IMR-90 (cell line): ENCODE measurements at regions of chr21 and their contacts with region 1.

Region 1: DNA sequence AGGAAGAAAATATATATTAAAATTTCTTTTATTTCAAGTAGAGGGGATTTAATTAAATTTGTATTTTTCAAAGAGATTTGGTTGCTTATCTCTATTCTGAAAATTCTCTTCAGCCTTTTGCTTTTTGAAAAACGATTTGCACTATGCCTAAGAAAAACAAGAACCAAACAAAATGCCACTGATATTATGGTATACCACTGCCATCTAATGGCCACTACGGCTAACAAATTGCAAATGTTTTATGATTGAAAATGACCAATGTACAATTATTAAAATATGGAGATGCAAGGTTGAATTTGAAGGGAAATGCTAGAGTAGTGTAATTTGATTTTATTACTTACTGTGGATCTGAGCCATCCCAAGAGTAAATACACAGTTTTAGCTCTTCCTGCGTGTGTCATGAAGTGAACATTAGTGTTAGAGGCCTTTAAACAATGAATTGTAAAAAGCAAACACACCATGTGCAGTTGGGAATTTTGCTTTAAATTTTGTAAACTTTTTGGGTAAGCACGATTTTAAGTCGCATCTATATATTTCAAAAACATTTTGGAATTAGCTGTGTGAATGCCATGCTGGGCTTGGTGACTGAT is 137.4 kb upstream of the USP25 start:
- DNase-seq: peak; percentile 45
- ATAC-seq: peak; percentile 62
- H3K4me3 ChIP-seq: no peak overlapping the region
- H3K27ac ChIP-seq: no peak overlapping the region
- H3K4me1 ChIP-seq: no peaks in the 10 kb centered on the region
- H3K27me3 ChIP-seq: peaks cover 2% of the 10 kb centered on the region
- CTCF ChIP-seq: peak; percentile 69
- POLR2A ChIP-seq: no peak
- RAD21 ChIP-seq: peak; percentile 74

Region 2: GRCh38 chr21:14259747-14260146 is 1332.6 kb before region 1 on chr21:
- CTCF ChIA-PET with region 1: no interaction called
- POLR2A ChIA-PET with region 1: no interaction called
- dilution Hi-C with region 1: no loop called
- in situ Hi-C with region 1: no loop called
- intact Hi-C with region 1: loop called (anchors 2 kb)
- DNase-seq: peak; percentile 56
- ATAC-seq: peak; percentile 74
- H3K4me3 ChIP-seq: no peak overlapping the region
- H3K27ac ChIP-seq: no peak overlapping the region
- H3K4me1 ChIP-seq: no peaks in the 10 kb centered on the region
- H3K27me3 ChIP-seq: no peaks in the 10 kb centered on the region
- CTCF ChIP-seq: peak; percentile 61
- POLR2A ChIP-seq: no peak
- RAD21 ChIP-seq: peak; percentile 63

Region 3: DNA sequence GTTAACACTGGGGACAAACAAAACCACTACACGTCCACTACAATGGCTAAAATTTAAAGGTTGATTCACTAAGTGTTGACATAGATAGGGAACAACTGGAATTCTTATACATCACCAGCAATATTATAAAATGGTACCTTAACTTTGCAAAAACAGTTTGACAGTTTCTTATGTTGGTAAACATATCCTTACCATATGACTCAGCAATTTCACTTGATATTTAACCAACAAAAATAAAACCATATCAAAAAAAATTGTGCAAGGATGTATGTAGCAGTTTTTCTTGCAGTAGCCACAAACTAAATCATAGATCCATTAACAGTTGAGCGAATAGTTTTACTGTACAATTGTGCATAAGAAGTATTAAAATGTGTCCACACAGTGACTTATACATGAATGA is 1204.1 kb before region 1 on chr21:
- CTCF ChIA-PET with region 1: no interaction called
- POLR2A ChIA-PET with region 1: no interaction called
- dilution Hi-C with region 1: no loop called
- in situ Hi-C with region 1: no loop called
- intact Hi-C with region 1: loop called (anchors 5 kb)
- DNase-seq: no peak
- ATAC-seq: no peak
- H3K4me3 ChIP-seq: no peak overlapping the region
- H3K27ac ChIP-seq: no peak overlapping the region
- H3K4me1 ChIP-seq: no peaks in the 10 kb centered on the region
- H3K27me3 ChIP-seq: no peaks in the 10 kb centered on the region
- CTCF ChIP-seq: no peak
- POLR2A ChIP-seq: no peak
- RAD21 ChIP-seq: no peak

Region 4: GRCh38 chr21:14403681-14404318 is 1188.6 kb before region 1 on chr21:
- CTCF ChIA-PET with region 1: no interaction called
- POLR2A ChIA-PET with region 1: no interaction called
- dilution Hi-C with region 1: no loop called
- in situ Hi-C with region 1: no loop called
- intact Hi-C with region 1: loop called (anchors 1 kb)
- DNase-seq: peak; percentile 45
- ATAC-seq: peak; percentile 69
- H3K4me3 ChIP-seq: no peak overlapping the region
- H3K27ac ChIP-seq: no peak overlapping the region
- H3K4me1 ChIP-seq: no peaks in the 10 kb centered on the region
- H3K27me3 ChIP-seq: no peaks in the 10 kb centered on the region
- CTCF ChIP-seq: peak; percentile 66
- POLR2A ChIP-seq: no peak
- RAD21 ChIP-seq: peak; percentile 66

Region 5: GRCh38 chr21:15638856-15639549 is 46.6 kb after region 1 on chr21:
- CTCF ChIA-PET with region 1: no interaction called
- POLR2A ChIA-PET with region 1: no interaction called
- dilution Hi-C with region 1: no loop called
- in situ Hi-C with region 1: no loop called
- intact Hi-C with region 1: no loop called
- DNase-seq: no peak
- ATAC-seq: no peak; the same call in 1 of the 2 replicates
- H3K4me3 ChIP-seq: no peak overlapping the region
- H3K27ac ChIP-seq: no peak overlapping the region
- H3K4me1 ChIP-seq: no peaks in the 10 kb centered on the region
- H3K27me3 ChIP-seq: no peaks in the 10 kb centered on the region
- CTCF ChIP-seq: no peak
- POLR2A ChIP-seq: no peak
- RAD21 ChIP-seq: no peak

Region 6: DNA sequence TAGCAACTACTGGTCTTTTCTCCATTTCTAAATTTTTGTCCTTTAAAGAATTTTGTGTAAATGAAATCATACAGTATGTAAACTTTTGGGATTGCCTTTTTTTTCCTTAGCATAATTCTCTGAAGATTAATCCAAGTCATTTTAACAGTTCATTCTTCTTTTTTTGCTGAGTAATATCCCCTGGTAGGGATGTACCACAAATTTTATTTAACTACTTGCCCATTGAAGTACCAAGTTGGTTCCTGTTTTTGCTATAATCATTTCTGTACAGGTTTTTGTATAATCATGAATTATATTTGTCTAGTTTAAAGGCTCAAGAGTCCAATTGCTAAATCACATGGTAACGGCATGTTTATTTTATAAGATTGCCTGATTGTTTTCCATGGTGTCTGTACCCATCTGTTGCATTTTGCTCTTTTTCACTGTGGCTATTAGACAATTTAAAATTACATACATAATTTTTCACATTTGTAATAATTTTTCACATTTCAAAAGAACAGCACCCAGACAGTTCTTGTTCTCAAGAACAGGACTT is 1028.5 kb after region 1 on chr21:
- CTCF ChIA-PET with region 1: no interaction called
- POLR2A ChIA-PET with region 1: no interaction called
- dilution Hi-C with region 1: no loop called
- in situ Hi-C with region 1: no loop called
- intact Hi-C with region 1: no loop called
- DNase-seq: no peak
- ATAC-seq: no peak
- H3K4me3 ChIP-seq: no peak overlapping the region
- H3K27ac ChIP-seq: no peak overlapping the region
- H3K4me1 ChIP-seq: no peaks in the 10 kb centered on the region
- H3K27me3 ChIP-seq: no peaks in the 10 kb centered on the region
- CTCF ChIP-seq: no peak
- POLR2A ChIP-seq: no peak
- RAD21 ChIP-seq: no peak